Activated CD8-positive, alpha-beta memory T cell treated with anti-CD3 and anti-CD28 coated beads, Interleukin-2, amount 10 ng/mL, durations not matched to agents 7 days and 5 days (primary cell): ENCODE measurements at regions of chrX and their contacts with region 1.

Region 1: GRCh38 chrX:119981286-119982070 is 37.9 kb upstream of the NKAP start:
- DNase-seq: peak; percentile 40
- ATAC-seq: no peak
- H3K4me3 Mint-ChIP-seq: no peak overlapping the region
- H3K27ac Mint-ChIP-seq: no peak overlapping the region
- H3K4me1 Mint-ChIP-seq: no peaks in the 10 kb centered on the region
- H3K27me3 Mint-ChIP-seq: peaks cover 22% of the 10 kb centered on the region

Region 2: GRCh38 chrX:119970574-119970973 is 10.9 kb before region 1 on chrX:
- CTCF ChIA-PET with region 1: no interaction called
- DNase-seq: no peak
- ATAC-seq: no peak
- H3K4me3 Mint-ChIP-seq: no peak overlapping the region
- H3K27ac Mint-ChIP-seq: no peak overlapping the region
- H3K4me1 Mint-ChIP-seq: peaks cover 1% of the 10 kb centered on the region
- H3K27me3 Mint-ChIP-seq: no peaks in the 10 kb centered on the region

Region 3: GRCh38 chrX:120000490-120001246 is 19.2 kb after region 1 on chrX:
- CTCF ChIA-PET with region 1: interaction called, 13 read pairs
- DNase-seq: no peak
- ATAC-seq: no peak
- H3K4me3 Mint-ChIP-seq: no peak overlapping the region
- H3K27ac Mint-ChIP-seq: no peak overlapping the region
- H3K4me1 Mint-ChIP-seq: peaks cover 16% of the 10 kb centered on the region
- H3K27me3 Mint-ChIP-seq: peaks cover 80% of the 10 kb centered on the region

Region 4: GRCh38 chrX:120090208-120090607 is 108.7 kb after region 1 on chrX:
- CTCF ChIA-PET with region 1: no interaction called
- DNase-seq: no peak
- ATAC-seq: no peak
- H3K4me3 Mint-ChIP-seq: no peak overlapping the region
- H3K27ac Mint-ChIP-seq: no peak overlapping the region
- H3K4me1 Mint-ChIP-seq: peaks cover 3% of the 10 kb centered on the region
- H3K27me3 Mint-ChIP-seq: no peaks in the 10 kb centered on the region